ENCODE measurements at regions of chr19 and their contacts with region 1.

Region 1: DNA sequence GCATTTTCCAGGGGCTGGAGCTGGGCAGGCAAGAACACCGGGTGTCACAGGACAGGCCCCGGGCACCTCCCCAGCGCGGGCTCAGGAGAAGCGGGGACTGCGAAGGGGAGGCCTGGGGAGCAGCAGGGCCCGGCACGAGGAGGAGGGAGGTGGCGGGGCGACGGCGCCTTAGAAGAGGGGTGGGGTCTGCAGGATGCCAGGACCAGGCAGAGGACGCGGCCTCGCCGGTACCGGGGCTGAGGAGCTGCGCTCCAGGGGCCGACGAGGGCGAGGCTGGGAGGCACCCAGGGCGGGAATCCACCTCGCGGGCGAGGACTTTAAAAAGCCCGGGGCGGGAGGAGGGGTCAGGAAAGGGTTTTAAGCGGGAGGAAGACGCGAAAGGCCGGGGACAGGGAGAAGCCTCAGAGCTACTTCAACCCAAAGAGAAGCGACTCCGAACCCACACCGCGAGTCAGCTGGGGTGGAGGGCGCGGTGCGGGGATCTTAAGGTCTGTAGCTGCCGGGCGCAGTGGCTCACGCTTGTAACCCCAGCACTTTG is 665 bp downstream of the ZNF347 start:
- DNase-seq: no peak
- H3K4me3 ChIP-seq: peak overlapping the region; percentile 57 to 79 (median 76)
- H3K27ac ChIP-seq: peak overlapping the region; percentile 76 to 84 (median 84)
- H3K4me1 ChIP-seq: peaks cover 0 to 27% (median 20%) of the 10 kb centered on the region in 4 donors
- H3K27me3 ChIP-seq: no peaks in the 10 kb centered on the region
- CTCF ChIP-seq: no peak
- EP300 ChIP-seq: no peak
- POLR2A ChIP-seq: no peak

Region 2: DNA sequence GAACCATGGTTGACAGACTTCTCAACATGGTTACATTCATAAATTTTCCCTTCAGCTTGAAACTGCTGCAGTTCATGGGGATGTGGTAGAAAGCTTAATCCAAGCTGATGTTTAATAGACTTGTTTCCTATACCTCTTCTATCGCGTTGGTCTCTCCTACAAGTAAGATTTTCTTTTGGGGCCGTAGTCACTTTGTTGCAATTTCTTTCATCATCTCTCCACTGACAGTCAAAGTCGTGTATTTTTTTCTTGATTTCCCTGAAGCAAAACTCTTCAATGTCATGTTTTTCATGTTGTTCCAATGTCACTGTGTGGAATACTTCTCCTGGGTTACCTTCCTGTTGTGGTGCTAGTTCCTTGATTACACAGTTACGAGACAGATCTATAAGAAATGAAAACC is 48.7 kb before region 1 on chr19:
- intact Hi-C with region 1: loop called (anchors 5 kb)
- DNase-seq: no peak
- H3K4me3 ChIP-seq: no peak overlapping the region
- H3K27ac ChIP-seq: no peak overlapping the region
- H3K4me1 ChIP-seq: no peaks in the 10 kb centered on the region
- H3K27me3 ChIP-seq: no peaks in the 10 kb centered on the region
- CTCF ChIP-seq: no peak
- EP300 ChIP-seq: no peak
- POLR2A ChIP-seq: no peak

Region 3: GRCh38 chr19:53172892-53173291 is 14.7 kb after region 1 on chr19:
- intact Hi-C with region 1: no loop called
- DNase-seq: no peak
- H3K4me3 ChIP-seq: no peak overlapping the region
- H3K27ac ChIP-seq: no peak overlapping the region
- H3K4me1 ChIP-seq: no peaks in the 10 kb centered on the region
- H3K27me3 ChIP-seq: no peaks in the 10 kb centered on the region
- CTCF ChIP-seq: no peak
- EP300 ChIP-seq: no peak
- POLR2A ChIP-seq: no peak